Heart left ventricle (tissue), 16 donors: ENCODE measurements at regions of chr22 and their contacts with region 1.

Region 1: GRCh38 chr22:40939202-40939601 is 12.0 kb upstream of the RBX1 start:
- DNase-seq: no peak
- ATAC-seq: no peak
- H3K4me3 ChIP-seq: no peak overlapping the region
- H3K27ac ChIP-seq: no peak overlapping the region
- H3K4me1 ChIP-seq: no peaks in the 10 kb centered on the region
- H3K27me3 ChIP-seq: no peaks in the 10 kb centered on the region
- CTCF ChIP-seq: no peak
- POLR2A ChIP-seq: no peak

Region 2: GRCh38 chr22:40979871-40980270 is 40.7 kb after region 1 on chr22:
- intact Hi-C with region 1: loop called in 1 of 10 experiments (anchors 2 kb)
- DNase-seq: no peak
- ATAC-seq: no peak
- H3K4me3 ChIP-seq: no peak overlapping the region
- H3K27ac ChIP-seq: no peak overlapping the region
- H3K4me1 ChIP-seq: peaks cover 0 to 9% (median under 1%) of the 10 kb centered on the region in 12 donors
- H3K27me3 ChIP-seq: no peaks in the 10 kb centered on the region
- CTCF ChIP-seq: no peak
- POLR2A ChIP-seq: no peak